ENCODE measurements at regions of chr16 and their contacts with region 1.

Region 1: GRCh38 chr16:19959736-19960135 is 75.1 kb upstream of the GPRC5B start:
- DNase-seq: no peak
- ATAC-seq: no peak
- H3K4me3 ChIP-seq: no peak overlapping the region
- H3K27ac ChIP-seq: no peak overlapping the region
- H3K4me1 ChIP-seq: no peaks in the 10 kb centered on the region
- H3K27me3 ChIP-seq: peaks cover 30% of the 10 kb centered on the region
- CTCF ChIP-seq: no peak

Region 2: GRCh38 chr16:19356024-19356952 is 603.4 kb before region 1 on chr16:
- CTCF ChIA-PET with region 1: no interaction called
- POLR2A ChIA-PET with region 1: interaction called, 17 read pairs
- in situ Hi-C with region 1: no loop called
- intact Hi-C with region 1: no loop called
- DNase-seq: no peak
- ATAC-seq: no peak
- H3K4me3 ChIP-seq: no peak overlapping the region
- H3K27ac ChIP-seq: no peak overlapping the region
- H3K4me1 ChIP-seq: no peaks in the 10 kb centered on the region
- H3K27me3 ChIP-seq: no peaks in the 10 kb centered on the region
- CTCF ChIP-seq: no peak

Region 3: GRCh38 chr16:19923396-19923795 is 36.3 kb before region 1 on chr16:
- CTCF ChIA-PET with region 1: no interaction called
- POLR2A ChIA-PET with region 1: no interaction called
- in situ Hi-C with region 1: no loop called
- intact Hi-C with region 1: loop called (anchors 5 kb)
- DNase-seq: no peak
- ATAC-seq: no peak
- H3K4me3 ChIP-seq: no peak overlapping the region
- H3K27ac ChIP-seq: no peak overlapping the region
- H3K4me1 ChIP-seq: no peaks in the 10 kb centered on the region
- H3K27me3 ChIP-seq: no peaks in the 10 kb centered on the region
- CTCF ChIP-seq: no peak

Region 4: GRCh38 chr16:19933740-19934139 is 26.0 kb before region 1 on chr16:
- CTCF ChIA-PET with region 1: no interaction called
- POLR2A ChIA-PET with region 1: no interaction called
- in situ Hi-C with region 1: no loop called
- intact Hi-C with region 1: loop called (anchors 1 kb)
- DNase-seq: no peak
- ATAC-seq: no peak
- H3K4me3 ChIP-seq: no peak overlapping the region
- H3K27ac ChIP-seq: no peak overlapping the region
- H3K4me1 ChIP-seq: no peaks in the 10 kb centered on the region
- H3K27me3 ChIP-seq: peaks cover 16% of the 10 kb centered on the region
- CTCF ChIP-seq: no peak

Measured in Panc1 (cell line).